MCF 10A (cell line): ENCODE measurements at regions of chr3 and their contacts with region 1.

Region 1: GRCh38 chr3:95097492-95097891 is 1034.6 kb downstream of the NSUN3 start:
- DNase-seq: peak; percentile 6
- H3K4me3 Mint-ChIP-seq: no peak overlapping the region
- H3K27ac Mint-ChIP-seq: no peak overlapping the region
- H3K4me1 Mint-ChIP-seq: no peaks in the 10 kb centered on the region
- H3K27me3 Mint-ChIP-seq: peaks cover 65% of the 10 kb centered on the region
- CTCF ChIP-seq: no peak

Region 2: GRCh38 chr3:95082191-95082590 is 15.3 kb before region 1 on chr3:
- CTCF ChIA-PET with region 1: no interaction called
- POLR2A ChIA-PET with region 1: no interaction called
- intact Hi-C with region 1: no loop called
- DNase-seq: no peak
- H3K4me3 Mint-ChIP-seq: no peak overlapping the region
- H3K27ac Mint-ChIP-seq: no peak overlapping the region
- H3K4me1 Mint-ChIP-seq: no peaks in the 10 kb centered on the region
- H3K27me3 Mint-ChIP-seq: peaks cover 97% of the 10 kb centered on the region
- CTCF ChIP-seq: no peak

Region 3: GRCh38 chr3:95134693-95135413 is 37.4 kb after region 1 on chr3:
- CTCF ChIA-PET with region 1: no interaction called
- POLR2A ChIA-PET with region 1: no interaction called
- intact Hi-C with region 1: loop called (anchors 2 kb)
- DNase-seq: no peak
- H3K4me3 Mint-ChIP-seq: no peak overlapping the region
- H3K27ac Mint-ChIP-seq: no peak overlapping the region
- H3K4me1 Mint-ChIP-seq: no peaks in the 10 kb centered on the region
- H3K27me3 Mint-ChIP-seq: peaks cover 96% of the 10 kb centered on the region
- CTCF ChIP-seq: no peak